Sigmoid colon (tissue), 7 donors: ENCODE measurements at regions of chr7 and their contacts with region 1.

Region 1: DNA sequence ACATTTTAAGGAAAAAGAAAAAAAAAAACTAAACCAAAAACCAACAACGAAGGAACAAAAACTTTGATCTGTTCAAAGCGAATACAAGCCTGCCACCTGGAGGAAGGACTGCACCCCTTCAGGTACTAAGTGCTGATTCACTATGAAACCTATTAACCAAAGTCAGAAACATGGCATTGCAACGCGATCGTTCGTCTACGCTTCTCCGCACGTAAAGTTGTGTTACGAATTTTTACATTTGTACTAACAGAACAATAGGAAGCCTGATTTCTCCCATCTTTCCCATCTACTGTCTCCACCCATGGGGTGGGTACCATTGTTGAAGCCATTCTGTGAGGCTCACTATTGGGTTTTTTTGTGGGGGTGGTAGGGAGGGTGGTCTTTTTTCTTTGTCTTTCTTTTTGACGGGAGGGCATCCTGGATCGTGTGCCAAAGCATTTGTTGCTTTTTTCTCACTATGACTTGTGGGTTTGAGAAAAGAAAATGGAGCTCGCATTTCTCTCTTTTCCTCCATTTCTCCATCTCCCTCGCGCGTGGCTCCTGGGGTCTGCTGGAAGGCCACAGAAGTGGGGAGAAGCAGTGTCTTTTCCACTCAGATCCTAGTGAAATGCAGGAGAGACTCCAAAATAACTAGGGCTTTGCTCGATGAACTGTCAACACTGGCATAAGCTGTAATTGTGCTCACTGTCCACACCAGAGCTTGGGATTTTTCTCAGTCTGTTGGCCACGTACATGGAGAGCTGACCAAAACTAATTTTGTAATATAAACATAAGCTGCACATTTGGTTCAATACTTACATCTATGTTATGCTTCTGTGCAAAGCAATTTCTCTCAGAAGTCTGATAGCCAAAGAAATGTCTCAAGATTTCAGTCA is 100.9 kb upstream of the YAE1 start:
- DNase-seq: no peak
- H3K4me3 ChIP-seq: peak overlapping the region in 1 of 4 donors; percentile 8
- H3K27ac ChIP-seq: no peak overlapping the region
- H3K4me1 ChIP-seq: no peaks in the 10 kb centered on the region
- H3K27me3 ChIP-seq: no peaks in the 10 kb centered on the region
- CTCF ChIP-seq: peak; percentile 52 to 77 (median 64)
- EP300 ChIP-seq: no peak
- POLR2A ChIP-seq: no peak

Region 2: GRCh38 chr7:38796626-38797501 is 668.4 kb before region 1 on chr7:
- intact Hi-C with region 1: loop called (anchors 2 kb)
- DNase-seq: no peak
- H3K4me3 ChIP-seq: no peak overlapping the region
- H3K27ac ChIP-seq: no peak overlapping the region
- H3K4me1 ChIP-seq: no peaks in the 10 kb centered on the region
- H3K27me3 ChIP-seq: no peaks in the 10 kb centered on the region
- CTCF ChIP-seq: peak; percentile 67 to 74 (median 70)
- EP300 ChIP-seq: no peak
- POLR2A ChIP-seq: no peak

Region 3: DNA sequence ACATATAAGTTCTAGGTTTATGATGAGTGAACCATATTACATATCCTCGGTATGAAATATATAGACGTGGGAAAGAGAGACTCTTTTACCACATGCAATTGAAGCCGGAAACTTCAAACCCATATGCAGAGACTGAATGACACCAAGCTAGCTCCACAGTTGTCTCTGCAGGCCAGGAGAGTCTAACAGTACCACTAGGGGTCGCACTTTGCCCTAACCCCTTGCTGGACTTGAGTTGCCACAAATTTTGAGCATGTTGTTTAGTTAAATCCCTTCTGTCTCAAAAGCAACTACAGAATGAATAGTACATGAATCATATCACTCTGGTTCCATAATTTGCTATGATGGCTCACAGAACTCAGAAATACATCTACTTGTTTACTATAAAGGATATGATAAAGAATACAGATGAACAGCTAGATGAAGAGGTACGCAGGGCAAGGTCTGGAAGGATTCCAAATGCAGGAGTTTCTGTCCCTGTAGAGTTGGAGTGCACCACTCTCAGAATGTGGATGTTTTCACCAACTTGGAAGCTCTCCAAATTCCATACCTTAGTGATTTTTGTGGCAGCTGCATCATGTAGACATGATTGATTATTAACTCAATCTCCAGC is 11.4 kb before region 1 on chr7:
- intact Hi-C with region 1: no loop called
- DNase-seq: no peak
- H3K4me3 ChIP-seq: no peak overlapping the region
- H3K27ac ChIP-seq: no peak overlapping the region
- H3K4me1 ChIP-seq: no peaks in the 10 kb centered on the region
- H3K27me3 ChIP-seq: peaks cover 0 to 7% (median 0%) of the 10 kb centered on the region in 3 donors
- CTCF ChIP-seq: peak in 3 of 4 experiments; percentile 8 to 19 (median 17)
- EP300 ChIP-seq: no peak
- POLR2A ChIP-seq: no peak